PC-9 (cell line): ENCODE measurements at regions of chr9 and their contacts with region 1.

Region 1: GRCh38 chr9:21812946-21813568 is 10.6 kb downstream of the MTAP start:
- DNase-seq: peak; percentile 47 to 54
- H3K4me3 ChIP-seq: no peak overlapping the region
- H3K27ac ChIP-seq: peak overlapping the region; percentile 53
- H3K4me1 ChIP-seq: 0 out of 2 replicates have a peak, but pooled peaks cover 7% of the 10 kb centered on the region
- H3K27me3 ChIP-seq: no peaks in the 10 kb centered on the region
- CTCF ChIP-seq: peak; percentile 81

Region 2: GRCh38 chr9:21317956-21318923 is 494.8 kb before region 1 on chr9:
- CTCF ChIA-PET with region 1: no interaction called
- POLR2A ChIA-PET with region 1: no interaction called
- intact Hi-C with region 1: loop called (anchors 5 kb)
- DNase-seq: peak in 1 of 2 experiments; percentile 17
- H3K4me3 ChIP-seq: no peak overlapping the region
- H3K27ac ChIP-seq: no peak overlapping the region
- H3K4me1 ChIP-seq: no peaks in the 10 kb centered on the region
- H3K27me3 ChIP-seq: no peaks in the 10 kb centered on the region
- CTCF ChIP-seq: peak; percentile 66

Region 3: GRCh38 chr9:21761309-21761901 is 51.7 kb before region 1 on chr9:
- CTCF ChIA-PET with region 1: no interaction called
- POLR2A ChIA-PET with region 1: no interaction called
- intact Hi-C with region 1: no loop called
- DNase-seq: no peak
- H3K4me3 ChIP-seq: no peak overlapping the region
- H3K27ac ChIP-seq: no peak overlapping the region
- H3K4me1 ChIP-seq: no peaks in the 10 kb centered on the region
- H3K27me3 ChIP-seq: no peaks in the 10 kb centered on the region
- CTCF ChIP-seq: no peak

Region 4: DNA sequence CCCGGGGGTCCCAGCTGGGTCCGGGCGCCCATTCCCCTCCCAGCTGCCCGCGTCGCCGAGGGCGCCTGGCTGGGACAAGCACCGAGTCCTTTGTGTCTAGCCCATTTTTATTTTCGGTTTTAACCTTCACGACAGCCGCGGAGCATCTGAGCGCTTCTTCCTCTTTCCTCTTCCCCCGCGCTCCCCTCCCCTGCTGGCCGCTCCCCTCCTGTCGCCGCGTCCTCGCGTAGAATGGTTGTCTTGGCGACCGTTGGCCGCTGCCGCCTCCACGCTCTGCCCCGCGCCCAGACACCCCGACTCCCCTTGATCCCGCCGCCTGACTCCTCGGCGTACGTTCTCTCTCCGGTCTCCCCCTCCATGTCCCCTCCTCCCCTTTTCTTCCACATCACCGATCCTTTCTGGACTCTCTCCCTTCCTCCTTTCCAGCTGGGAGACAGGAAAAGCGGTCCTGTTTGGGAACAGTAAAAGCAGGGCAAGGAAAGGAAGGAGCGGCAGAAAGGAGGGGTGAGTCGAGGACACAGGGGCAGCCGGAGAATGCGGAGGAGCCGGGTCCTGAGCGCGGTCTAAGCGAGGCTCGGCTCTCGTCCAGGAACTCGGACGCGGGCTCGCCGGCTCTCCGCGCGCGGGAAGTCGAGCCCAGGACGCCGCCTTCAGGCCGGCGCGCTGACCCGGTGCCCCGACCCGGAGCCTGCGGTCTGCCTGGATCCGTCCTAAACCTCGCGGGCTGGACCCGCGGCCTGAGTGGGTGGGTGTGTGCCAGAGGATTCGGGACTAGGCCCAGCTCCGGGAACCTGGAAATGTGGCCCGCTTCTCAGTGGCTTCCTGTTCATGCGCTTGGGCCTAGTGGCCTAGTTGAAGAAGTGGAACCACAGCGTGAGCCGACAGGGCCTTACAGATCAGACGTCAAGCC is 182.4 kb after region 1 on chr9:
- CTCF ChIA-PET with region 1: no interaction called
- POLR2A ChIA-PET with region 1: no interaction called
- intact Hi-C with region 1: loop called (anchors 1 kb)
- DNase-seq: peak; percentile 50 to 76
- H3K4me3 ChIP-seq: peak overlapping the region; percentile 98
- H3K27ac ChIP-seq: peak overlapping the region; percentile 69
- H3K4me1 ChIP-seq: peaks cover 26% of the 10 kb centered on the region; the same call in 1 of the 2 replicates
- H3K27me3 ChIP-seq: no peaks in the 10 kb centered on the region
- CTCF ChIP-seq: 0 out of 2 replicates have a peak, but pooled peaks have one; percentile 25

Region 5: DNA sequence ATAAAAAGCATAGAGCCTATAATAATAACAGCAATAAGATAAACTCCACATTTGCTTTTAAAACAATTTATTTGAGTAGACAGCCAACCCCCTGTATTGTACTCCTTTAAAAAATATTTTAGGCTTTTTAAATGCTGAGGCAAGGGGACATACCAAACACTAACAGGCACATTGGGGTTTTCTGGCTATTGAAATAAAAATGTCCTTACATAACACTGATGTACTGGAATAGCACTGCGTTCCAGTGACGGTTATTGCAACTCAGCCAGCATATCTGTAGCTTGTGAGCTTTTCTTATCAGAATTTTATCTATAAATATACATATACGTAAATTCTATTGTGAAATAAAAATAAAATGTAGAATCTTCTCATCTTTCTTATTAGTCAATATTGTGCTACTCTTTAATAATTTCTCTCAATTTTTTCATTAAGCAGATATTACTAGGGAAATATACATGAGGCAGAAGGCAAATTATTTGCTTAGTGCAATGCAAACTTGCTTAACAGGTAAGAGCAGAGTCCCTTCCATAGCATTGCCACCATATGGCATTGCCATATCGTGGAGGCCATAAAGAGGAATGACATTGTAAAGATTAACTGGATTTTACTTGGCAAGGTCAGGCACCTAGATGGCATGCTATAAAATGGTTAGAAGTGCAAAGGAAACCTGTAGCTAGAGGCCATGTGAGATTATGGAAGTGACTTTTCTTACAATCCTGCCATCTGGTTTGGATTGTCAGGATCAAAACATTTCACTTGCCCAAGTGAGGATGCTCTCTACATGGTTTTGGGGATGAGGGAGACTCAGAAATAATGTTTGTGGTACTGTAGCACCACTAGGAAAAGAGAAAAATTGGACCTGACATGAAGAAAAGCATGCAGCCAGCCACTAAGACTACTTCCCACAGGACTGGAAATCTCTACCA is 290.9 kb after region 1 on chr9:
- CTCF ChIA-PET with region 1: no interaction called
- POLR2A ChIA-PET with region 1: no interaction called
- intact Hi-C with region 1: loop called (anchors 5 kb)
- DNase-seq: peak in 1 of 2 experiments; percentile 51
- H3K4me3 ChIP-seq: peak overlapping the region; percentile 18; the same call in 1 of the 2 replicates
- H3K27ac ChIP-seq: peak overlapping the region; percentile 94
- H3K4me1 ChIP-seq: peaks cover 53% of the 10 kb centered on the region
- H3K27me3 ChIP-seq: no peaks in the 10 kb centered on the region
- CTCF ChIP-seq: no peak

Region 6: GRCh38 chr9:22307013-22307711 is 494.1 kb after region 1 on chr9:
- CTCF ChIA-PET with region 1: interaction called, 3 read pairs
- POLR2A ChIA-PET with region 1: no interaction called
- intact Hi-C with region 1: loop called (anchors 1 kb)
- DNase-seq: peak; percentile 7 to 40
- H3K4me3 ChIP-seq: no peak overlapping the region
- H3K27ac ChIP-seq: no peak overlapping the region
- H3K4me1 ChIP-seq: no peaks in the 10 kb centered on the region
- H3K27me3 ChIP-seq: no peaks in the 10 kb centered on the region
- CTCF ChIP-seq: peak; percentile 75

Region 7: GRCh38 chr9:22622815-22623214 is 809.8 kb after region 1 on chr9:
- CTCF ChIA-PET with region 1: interaction called, 11 read pairs
- POLR2A ChIA-PET with region 1: no interaction called
- intact Hi-C with region 1: no loop called
- DNase-seq: no peak
- H3K4me3 ChIP-seq: no peak overlapping the region
- H3K27ac ChIP-seq: no peak overlapping the region
- H3K4me1 ChIP-seq: no peaks in the 10 kb centered on the region
- H3K27me3 ChIP-seq: no peaks in the 10 kb centered on the region
- CTCF ChIP-seq: no peak